ENCODE measurements at regions of chr18 and their contacts with region 1.

Region 1: GRCh38 chr18:3062798-3063680 is 50.1 kb upstream of the LPIN2 start:
- DNase-seq: peak; percentile 46
- H3K4me3 ChIP-seq: no peak overlapping the region
- H3K27ac ChIP-seq: no peak overlapping the region
- H3K4me1 ChIP-seq: peaks cover 8% of the 10 kb centered on the region
- H3K27me3 ChIP-seq: no peaks in the 10 kb centered on the region
- CTCF ChIP-seq: peak; percentile 70 to 82
- POLR2A ChIP-seq: no peak

Region 2: DNA sequence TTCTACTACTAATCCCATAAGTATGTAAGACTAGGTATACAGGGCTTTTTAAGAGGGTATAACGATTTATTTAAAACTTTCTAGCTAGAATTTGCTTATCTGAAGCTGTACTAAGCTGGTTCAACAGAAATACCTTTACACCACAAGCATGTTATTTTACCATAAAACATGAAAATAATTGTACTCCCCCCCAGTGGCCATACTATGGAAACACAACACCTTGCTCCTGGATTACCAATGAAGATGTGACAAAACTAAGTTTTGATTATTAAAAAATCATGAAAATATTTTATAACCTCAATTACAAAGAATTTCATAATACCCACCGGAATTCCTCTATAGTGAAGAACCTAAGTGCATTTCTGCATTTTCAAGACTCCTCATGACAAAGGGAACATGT is 77.4 kb before region 1 on chr18:
- CTCF ChIA-PET with region 1: interaction called, 50 read pairs
- POLR2A ChIA-PET with region 1: no interaction called
- dilution Hi-C with region 1: no loop called
- intact Hi-C with region 1: no loop called
- DNase-seq: peak; percentile 48
- H3K4me3 ChIP-seq: no peak overlapping the region
- H3K27ac ChIP-seq: no peak overlapping the region
- H3K4me1 ChIP-seq: peaks cover 49% of the 10 kb centered on the region
- H3K27me3 ChIP-seq: no peaks in the 10 kb centered on the region
- CTCF ChIP-seq: peak; percentile 26 to 39
- POLR2A ChIP-seq: no peak

Region 3: GRCh38 chr18:3012964-3013804 is 49.9 kb before region 1 on chr18 and contains the start of gene LPIN2:
- CTCF ChIA-PET with region 1: interaction called, 51 read pairs
- POLR2A ChIA-PET with region 1: no interaction called
- dilution Hi-C with region 1: no loop called
- intact Hi-C with region 1: loop called (anchors 2 kb)
- DNase-seq: peak; percentile 98
- H3K4me3 ChIP-seq: peak within 1 kb of the TSS; percentile 74 to 96 (median 94)
- H3K27ac ChIP-seq: peak within 1 kb of the TSS; percentile 90
- H3K4me1 ChIP-seq: peaks cover 67% of the 10 kb centered on the region
- H3K27me3 ChIP-seq: no peaks in the 10 kb centered on the region
- CTCF ChIP-seq: no peak
- POLR2A ChIP-seq: peak; percentile 61
- total RNA-seq, gene LPIN2: 21.8 and 24.4 TPM in 2 replicates

Region 4: DNA sequence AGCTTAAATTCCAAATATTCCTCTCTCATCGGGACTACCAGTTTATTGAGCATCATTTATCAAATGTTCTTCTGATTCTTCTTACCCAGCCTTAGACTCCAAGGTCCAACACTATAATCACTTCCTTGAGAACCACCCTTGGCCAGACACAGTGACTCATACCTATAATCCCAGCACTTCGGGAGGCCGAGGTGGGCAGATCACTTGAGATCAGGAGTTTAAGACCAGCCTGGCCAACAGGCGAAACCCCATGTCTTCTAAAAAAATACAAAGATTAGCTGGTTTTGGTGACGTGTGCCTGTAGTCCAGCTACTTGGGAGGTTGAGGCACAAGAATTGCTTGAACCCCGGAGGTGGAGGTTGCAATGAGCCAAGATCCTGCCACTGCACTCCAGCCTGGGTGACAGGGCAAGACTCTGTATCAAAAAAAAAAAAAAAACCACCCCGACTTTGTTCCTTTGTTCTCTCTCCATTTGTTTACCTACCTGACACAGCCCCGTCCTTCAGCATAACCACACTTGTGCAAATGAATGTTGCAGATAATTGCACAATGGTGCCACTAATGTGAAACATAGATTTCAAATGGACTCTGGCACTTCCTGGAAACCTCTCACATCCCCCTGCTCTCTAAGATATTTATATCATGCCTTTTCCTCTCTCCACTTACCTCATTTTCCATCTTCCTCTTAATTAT is 11.2 kb before region 1 on chr18:
- CTCF ChIA-PET with region 1: interaction called, 10 read pairs
- POLR2A ChIA-PET with region 1: no interaction called
- dilution Hi-C with region 1: no loop called
- intact Hi-C with region 1: no loop called
- DNase-seq: no peak
- H3K4me3 ChIP-seq: no peak overlapping the region
- H3K27ac ChIP-seq: no peak overlapping the region
- H3K4me1 ChIP-seq: no peaks in the 10 kb centered on the region
- H3K27me3 ChIP-seq: no peaks in the 10 kb centered on the region
- CTCF ChIP-seq: no peak
- POLR2A ChIP-seq: no peak

Region 5: DNA sequence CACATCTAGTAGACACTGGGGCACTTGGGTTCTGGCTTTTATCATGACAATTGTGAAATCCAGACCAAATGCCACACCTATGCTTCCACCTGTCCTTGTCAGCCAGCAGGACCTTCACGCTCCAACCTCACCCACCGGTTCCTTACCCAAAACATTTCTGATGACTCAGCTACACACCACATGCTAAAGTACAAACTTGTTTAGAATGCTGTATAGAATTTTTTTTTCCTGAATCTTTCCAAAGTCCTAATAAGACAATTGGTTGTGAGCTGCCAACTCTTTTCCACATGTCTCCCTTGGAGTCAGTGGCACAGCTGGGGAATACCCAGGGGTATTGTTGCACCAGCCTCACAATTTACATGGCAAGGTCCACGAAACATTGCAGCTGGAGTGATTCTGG is 25.4 kb after region 1 on chr18:
- CTCF ChIA-PET with region 1: interaction called, 39 read pairs
- POLR2A ChIA-PET with region 1: no interaction called
- dilution Hi-C with region 1: no loop called
- intact Hi-C with region 1: no loop called
- DNase-seq: peak; percentile 55
- H3K4me3 ChIP-seq: no peak overlapping the region
- H3K27ac ChIP-seq: no peak overlapping the region
- H3K4me1 ChIP-seq: peaks cover 14% of the 10 kb centered on the region
- H3K27me3 ChIP-seq: no peaks in the 10 kb centered on the region
- CTCF ChIP-seq: no peak
- POLR2A ChIP-seq: no peak

Region 6: DNA sequence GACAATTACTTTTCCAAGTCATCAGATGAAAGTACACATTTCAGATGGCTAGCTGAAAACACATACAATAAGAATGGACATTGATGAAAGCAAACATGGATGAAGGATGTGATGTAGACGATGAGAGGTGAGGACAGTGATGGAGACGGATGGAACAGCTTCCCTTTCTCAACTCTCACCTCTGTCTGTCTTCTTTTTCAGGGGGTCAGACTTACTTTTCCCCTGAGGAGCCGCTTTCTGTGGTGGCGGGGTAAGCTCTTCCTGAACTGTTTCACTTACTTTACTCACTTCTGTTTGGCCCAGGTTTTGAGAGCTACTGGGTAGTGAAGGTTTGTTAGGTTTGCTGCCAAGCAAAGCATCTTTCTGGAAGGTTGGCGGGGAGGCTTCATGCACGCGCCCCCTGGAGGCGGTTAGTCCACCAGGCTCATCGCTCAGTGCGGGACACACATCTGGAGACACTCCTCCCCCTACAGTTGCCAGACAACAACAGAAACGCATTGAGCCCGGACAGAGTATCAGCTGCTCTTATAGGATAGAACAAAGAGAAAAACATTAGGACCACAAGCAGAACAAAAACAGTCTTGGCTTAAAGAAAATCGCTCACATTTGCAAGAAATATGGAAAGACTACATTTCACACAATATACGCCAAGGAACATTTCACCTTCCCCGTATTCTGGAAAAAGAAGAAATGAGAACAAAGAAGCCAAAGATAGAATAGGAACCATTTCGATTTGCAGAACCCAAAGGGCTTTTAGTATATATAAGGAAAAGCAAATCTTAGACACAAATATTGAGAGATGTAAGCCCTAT is 66.2 kb after region 1 on chr18:
- CTCF ChIA-PET with region 1: interaction called, 53 read pairs
- POLR2A ChIA-PET with region 1: no interaction called
- dilution Hi-C with region 1: no loop called
- intact Hi-C with region 1: no loop called
- DNase-seq: peak; percentile 87
- H3K4me3 ChIP-seq: no peak overlapping the region
- H3K27ac ChIP-seq: no peak overlapping the region
- H3K4me1 ChIP-seq: no peaks in the 10 kb centered on the region
- H3K27me3 ChIP-seq: no peaks in the 10 kb centered on the region
- CTCF ChIP-seq: peak; percentile 95 to 96
- POLR2A ChIP-seq: no peak